Activated CD8-positive, alpha-beta memory T cell treated with anti-CD3 and anti-CD28 coated beads, Interleukin-2, amount 10 ng/mL, durations not matched to agents 7 days and 5 days (primary cell): ENCODE measurements at regions of chrX and their contacts with region 1.

Region 1: GRCh38 chrX:118823263-118824172 is at the start of gene ZCCHC12:
- DNase-seq: no peak
- ATAC-seq: peak; percentile 45
- H3K4me3 Mint-ChIP-seq: no peak within 1 kb of the TSS
- H3K27ac Mint-ChIP-seq: no peak within 1 kb of the TSS
- H3K4me1 Mint-ChIP-seq: peaks cover 7% of the 10 kb centered on the region
- H3K27me3 Mint-ChIP-seq: peaks cover 59% of the 10 kb centered on the region
- total RNA-seq, gene ZCCHC12: not detected

Region 2: DNA sequence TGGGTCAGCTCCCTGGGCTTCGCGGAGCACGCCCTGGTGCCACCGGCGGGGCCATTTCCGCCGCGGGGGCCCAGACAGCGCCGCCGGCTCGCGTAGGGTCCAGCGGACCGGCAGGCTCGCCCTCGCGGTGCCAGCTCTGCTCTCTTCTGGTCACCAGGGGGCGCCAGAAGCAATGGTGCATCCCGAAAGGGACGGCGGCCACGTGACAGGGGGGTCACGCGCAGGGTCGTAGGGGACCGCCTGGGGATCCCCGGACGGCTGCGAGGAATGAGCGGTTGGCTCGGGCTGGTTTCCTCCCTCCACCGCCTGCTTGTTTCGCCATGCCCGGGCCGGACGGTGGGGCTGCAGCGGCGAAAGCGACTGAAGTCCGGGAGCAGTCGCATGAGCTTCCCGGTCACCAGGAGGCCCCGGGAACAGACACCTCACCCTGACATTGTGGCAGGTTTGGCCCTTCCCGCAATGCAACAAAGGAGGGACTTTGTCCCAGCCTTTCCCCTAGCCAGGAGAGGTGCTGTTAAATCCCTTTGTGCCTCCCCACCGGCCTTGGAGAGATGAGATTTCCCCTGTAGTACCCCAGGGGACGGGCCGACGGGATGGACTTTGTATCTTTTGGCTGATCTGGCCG is 15.9 kb after region 1 on chrX:
- CTCF ChIA-PET with region 1: interaction called, 13 read pairs
- DNase-seq: peak; percentile 66
- ATAC-seq: peak; percentile 65
- H3K4me3 Mint-ChIP-seq: peak overlapping the region; percentile 24
- H3K27ac Mint-ChIP-seq: no peak overlapping the region
- H3K4me1 Mint-ChIP-seq: peaks cover 1% of the 10 kb centered on the region
- H3K27me3 Mint-ChIP-seq: peaks cover 23% of the 10 kb centered on the region

Region 3: GRCh38 chrX:118983513-118983912 is 160.0 kb after region 1 on chrX:
- CTCF ChIA-PET with region 1: no interaction called
- DNase-seq: no peak
- ATAC-seq: no peak
- H3K4me3 Mint-ChIP-seq: no peak overlapping the region
- H3K27ac Mint-ChIP-seq: no peak overlapping the region
- H3K4me1 Mint-ChIP-seq: no peaks in the 10 kb centered on the region
- H3K27me3 Mint-ChIP-seq: peaks cover 2% of the 10 kb centered on the region